Activated CD8-positive, alpha-beta T cell treated with anti-CD3 and anti-CD28 coated beads for 36 hours (primary cell): ENCODE measurements at regions of chr9 and their contacts with region 1.

Region 1: GRCh38 chr9:89522261-89522958 is 24.5 kb upstream of the SEMA4D start:
- DNase-seq: peak; percentile 88
- ATAC-seq: peak; percentile 88
- H3K4me3 Mint-ChIP-seq: peak overlapping the region; percentile 64
- H3K27ac Mint-ChIP-seq: peak overlapping the region; percentile 97
- H3K4me1 Mint-ChIP-seq: peaks cover 90% of the 10 kb centered on the region
- H3K27me3 Mint-ChIP-seq: no peaks in the 10 kb centered on the region
- CTCF ChIP-seq: no peak

Region 2: DNA sequence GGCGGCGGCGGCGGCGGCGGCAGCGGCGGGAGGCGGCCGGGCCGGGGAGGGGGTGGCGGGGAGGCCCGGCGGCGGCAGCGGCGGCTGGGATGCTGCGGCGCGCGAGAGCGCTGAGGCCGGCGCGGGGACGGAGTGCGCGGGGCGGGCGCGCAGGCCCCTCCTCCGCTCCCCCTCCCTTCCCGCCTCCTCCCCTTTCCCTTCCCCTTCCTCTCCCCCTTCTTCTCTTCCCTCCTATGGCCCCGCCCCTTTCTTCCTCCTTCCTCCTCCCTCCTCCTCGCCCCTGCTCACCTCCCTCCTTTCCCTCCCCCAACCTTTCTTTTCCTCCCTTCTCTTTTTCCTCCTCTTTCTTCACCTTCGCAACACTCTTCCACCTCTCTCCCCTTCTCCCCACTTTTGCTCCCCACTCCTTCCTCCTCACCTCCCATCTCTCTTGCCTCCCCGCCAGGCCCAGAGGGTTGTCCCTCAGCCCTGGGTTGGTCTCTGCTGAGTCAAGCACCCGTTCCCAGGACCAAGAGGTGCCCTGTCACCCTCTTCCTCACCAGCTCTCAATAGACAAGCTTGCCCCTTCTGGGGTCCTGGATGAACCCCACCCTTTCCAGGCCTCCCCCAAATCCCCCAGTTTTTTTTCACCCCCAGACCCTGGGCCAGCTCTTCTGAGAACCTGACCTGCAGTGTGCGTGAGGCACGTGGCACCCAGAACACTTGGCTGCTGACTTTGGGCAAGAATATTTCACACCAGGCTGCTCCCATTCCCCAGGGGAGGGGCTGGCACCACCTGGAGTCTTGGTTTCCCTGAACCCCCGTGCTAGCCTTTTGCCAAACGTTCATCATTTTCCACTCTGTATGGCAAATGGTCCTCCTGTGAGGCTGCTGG is 24.2 kb before region 1 on chr9 and contains the start of gene SEMA4D:
- CTCF ChIA-PET with region 1: interaction called, 12 read pairs
- POLR2A ChIA-PET with region 1: interaction called, 14 read pairs
- intact Hi-C with region 1: loop called (anchors 2 kb)
- DNase-seq: peak; percentile 74
- ATAC-seq: peak; percentile 17
- H3K4me3 Mint-ChIP-seq: peak within 1 kb of the TSS; percentile 92
- H3K27ac Mint-ChIP-seq: peak within 1 kb of the TSS; percentile 94
- H3K4me1 Mint-ChIP-seq: peaks cover 77% of the 10 kb centered on the region
- H3K27me3 Mint-ChIP-seq: no peaks in the 10 kb centered on the region
- CTCF ChIP-seq: no peak
- total RNA-seq, gene SEMA4D: 290 to 317 TPM

Region 3: GRCh38 chr9:89505911-89506310 is 16.5 kb before region 1 on chr9:
- CTCF ChIA-PET with region 1: interaction called, 12 read pairs
- POLR2A ChIA-PET with region 1: interaction called, 14 read pairs
- intact Hi-C with region 1: no loop called
- DNase-seq: no peak
- ATAC-seq: no peak
- H3K4me3 Mint-ChIP-seq: no peak overlapping the region
- H3K27ac Mint-ChIP-seq: no peak overlapping the region
- H3K4me1 Mint-ChIP-seq: peaks cover 84% of the 10 kb centered on the region
- H3K27me3 Mint-ChIP-seq: no peaks in the 10 kb centered on the region
- CTCF ChIP-seq: no peak

Region 4: DNA sequence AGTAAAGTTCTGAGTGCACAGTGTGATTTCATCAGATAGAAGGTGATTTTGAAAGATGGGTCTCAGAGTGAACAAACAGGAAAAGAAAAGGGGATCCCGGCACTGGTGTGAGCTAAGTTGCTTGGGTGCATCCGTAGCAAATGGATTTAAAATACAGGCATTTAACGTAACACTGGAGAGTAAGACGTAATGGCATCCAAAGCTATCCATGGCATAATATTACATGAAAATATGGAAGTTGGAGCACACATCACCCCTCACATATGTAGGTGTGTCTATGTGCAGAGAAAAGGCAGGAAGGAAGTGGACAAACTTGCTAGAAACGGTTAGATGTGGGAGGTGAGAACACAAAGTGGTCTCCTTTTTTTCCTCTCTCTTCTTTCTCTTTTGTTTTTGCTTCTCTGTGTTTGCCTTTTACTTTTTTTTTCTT is 13.8 kb after region 1 on chr9:
- CTCF ChIA-PET with region 1: interaction called, 11 read pairs
- POLR2A ChIA-PET with region 1: interaction called, 24 read pairs
- intact Hi-C with region 1: no loop called
- DNase-seq: peak; percentile 47
- ATAC-seq: peak; percentile 73
- H3K4me3 Mint-ChIP-seq: peak overlapping the region; percentile 47
- H3K27ac Mint-ChIP-seq: peak overlapping the region; percentile 96
- H3K4me1 Mint-ChIP-seq: peaks cover 88% of the 10 kb centered on the region
- H3K27me3 Mint-ChIP-seq: no peaks in the 10 kb centered on the region
- CTCF ChIP-seq: no peak

Region 5: GRCh38 chr9:89606622-89607310 is 84.4 kb after region 1 on chr9:
- CTCF ChIA-PET with region 1: no interaction called
- POLR2A ChIA-PET with region 1: no interaction called
- intact Hi-C with region 1: no loop called
- DNase-seq: peak; percentile 49
- ATAC-seq: peak; percentile 38
- H3K4me3 Mint-ChIP-seq: peak overlapping the region; percentile 84
- H3K27ac Mint-ChIP-seq: peak overlapping the region; percentile 25
- H3K4me1 Mint-ChIP-seq: peaks cover 23% of the 10 kb centered on the region
- H3K27me3 Mint-ChIP-seq: peaks cover 1% of the 10 kb centered on the region
- CTCF ChIP-seq: no peak

Region 6: DNA sequence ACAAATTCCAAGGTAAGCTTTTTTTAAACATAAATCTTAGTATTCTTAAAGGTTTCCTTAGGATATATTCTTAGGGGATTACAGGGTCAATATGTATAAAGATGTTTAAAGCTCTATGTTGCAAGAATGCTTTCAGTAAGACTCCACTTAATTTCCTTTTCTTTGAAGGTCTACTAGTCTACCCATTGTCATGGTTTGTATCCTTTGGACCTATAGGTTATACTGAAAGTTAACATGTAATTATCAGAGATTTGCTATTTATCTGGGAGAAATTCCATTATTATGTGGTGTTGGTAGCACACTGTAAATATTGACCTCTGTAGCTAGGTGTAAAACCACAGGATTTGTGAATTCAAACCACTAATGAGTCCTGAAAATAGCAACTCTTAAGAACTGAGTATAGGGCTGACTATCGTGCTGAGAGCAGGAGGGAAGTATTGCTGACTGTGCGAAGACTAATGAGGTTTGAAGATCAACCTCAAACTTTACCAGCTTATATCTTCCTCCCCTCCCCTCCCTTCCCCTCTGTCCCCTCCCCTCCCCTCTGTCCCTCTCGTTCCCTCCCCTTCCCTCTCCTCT is 168.0 kb after region 1 on chr9:
- CTCF ChIA-PET with region 1: no interaction called
- POLR2A ChIA-PET with region 1: no interaction called
- intact Hi-C with region 1: no loop called
- DNase-seq: no peak
- ATAC-seq: peak; percentile 74
- H3K4me3 Mint-ChIP-seq: no peak overlapping the region
- H3K27ac Mint-ChIP-seq: no peak overlapping the region
- H3K4me1 Mint-ChIP-seq: peaks cover 19% of the 10 kb centered on the region
- H3K27me3 Mint-ChIP-seq: peaks cover 1% of the 10 kb centered on the region
- CTCF ChIP-seq: no peak